SK-N-SH (cell line): ENCODE measurements at regions of chr5 and their contacts with region 1.

Region 1: GRCh38 chr5:140966293-140967225 is at the start of gene PCDHAC2:
- DNase-seq: peak; percentile 83
- H3K4me3 ChIP-seq: peak within 1 kb of the TSS; percentile 64 to 75
- H3K27ac ChIP-seq: peak within 1 kb of the TSS in 1 of 2 experiments; percentile 94; a peak in 2 of 4 replicates
- H3K4me1 ChIP-seq: peaks cover 8 to 41% of the 10 kb centered on the region in 2 experiments; a peak in 3 of 4 replicates
- H3K27me3 ChIP-seq: no peaks in the 10 kb centered on the region
- CTCF ChIP-seq: no peak
- EP300 ChIP-seq: no peak
- RAD21 ChIP-seq: no peak
- polyA plus RNA-seq, gene PCDHAC2: 0.39 and 0.76 TPM in 2 replicates

Region 2: GRCh38 chr5:140710899-140711552 is 255.5 kb before region 1 on chr5:
- CTCF ChIA-PET with region 1: no interaction called
- POLR2A ChIA-PET with region 1: no interaction called
- DNase-seq: peak; percentile 14
- H3K4me3 ChIP-seq: peak overlapping the region; percentile 2 to 31; a peak in 1 of 4 replicates
- H3K27ac ChIP-seq: peak overlapping the region in 1 of 2 experiments; percentile 60; a peak in 2 of 4 replicates
- H3K4me1 ChIP-seq: peaks cover 0 to 3% of the 10 kb centered on the region in 2 experiments; a peak in 1 of 4 replicates
- H3K27me3 ChIP-seq: no peaks in the 10 kb centered on the region
- CTCF ChIP-seq: no peak
- EP300 ChIP-seq: peak in 1 of 2 experiments; percentile 22; a peak in 1 of 4 replicates
- RAD21 ChIP-seq: no peak

Region 3: GRCh38 chr5:140875066-140876065 is 91.2 kb before region 1 on chr5 and contains the start of gene PCDHA12:
- CTCF ChIA-PET with region 1: interaction called, 26 read pairs
- POLR2A ChIA-PET with region 1: interaction called, 6 read pairs
- DNase-seq: peak; percentile 70
- H3K4me3 ChIP-seq: peak within 1 kb of the TSS; percentile 56 to 64
- H3K27ac ChIP-seq: peak within 1 kb of the TSS in 1 of 2 experiments; percentile 50; a peak in 2 of 4 replicates
- H3K4me1 ChIP-seq: no peaks in the 10 kb centered on the region; a peak in 2 of 4 replicates
- H3K27me3 ChIP-seq: no peaks in the 10 kb centered on the region
- CTCF ChIP-seq: peak; percentile 62
- EP300 ChIP-seq: no peak
- RAD21 ChIP-seq: peak; percentile 84
- polyA plus RNA-seq, gene PCDHA12: 0.54 and 0.70 TPM in 2 replicates

Region 4: DNA sequence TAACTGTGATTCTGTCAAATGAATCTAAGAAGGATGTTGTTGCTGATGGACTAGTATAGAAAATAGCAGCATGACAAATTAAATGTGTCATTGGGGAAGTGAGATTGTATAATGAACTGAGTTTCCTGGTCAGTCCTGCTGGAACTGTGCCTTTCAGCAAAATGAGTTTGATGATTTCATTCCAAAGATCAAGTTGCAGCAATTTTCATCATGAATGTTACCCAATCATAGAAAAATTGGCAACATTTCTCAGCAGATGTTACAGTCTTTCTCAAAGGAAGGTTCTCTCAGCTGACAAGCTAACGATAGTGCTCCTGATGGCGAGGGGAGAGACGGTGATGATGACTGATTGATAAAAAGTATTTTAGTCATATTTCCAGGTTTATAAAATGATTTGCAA is 10.4 kb after region 1 on chr5:
- CTCF ChIA-PET with region 1: interaction called, 6 read pairs
- POLR2A ChIA-PET with region 1: interaction called, 23 read pairs
- DNase-seq: no peak
- H3K4me3 ChIP-seq: no peak overlapping the region
- H3K27ac ChIP-seq: peak overlapping the region in 1 of 2 experiments; percentile 98; a peak in 2 of 4 replicates
- H3K4me1 ChIP-seq: peaks cover 9 to 33% of the 10 kb centered on the region in 2 experiments; a peak in 3 of 4 replicates
- H3K27me3 ChIP-seq: no peaks in the 10 kb centered on the region
- CTCF ChIP-seq: no peak
- EP300 ChIP-seq: peak in 1 of 2 experiments; percentile 28; a peak in 1 of 4 replicates
- RAD21 ChIP-seq: no peak

Region 5: DNA sequence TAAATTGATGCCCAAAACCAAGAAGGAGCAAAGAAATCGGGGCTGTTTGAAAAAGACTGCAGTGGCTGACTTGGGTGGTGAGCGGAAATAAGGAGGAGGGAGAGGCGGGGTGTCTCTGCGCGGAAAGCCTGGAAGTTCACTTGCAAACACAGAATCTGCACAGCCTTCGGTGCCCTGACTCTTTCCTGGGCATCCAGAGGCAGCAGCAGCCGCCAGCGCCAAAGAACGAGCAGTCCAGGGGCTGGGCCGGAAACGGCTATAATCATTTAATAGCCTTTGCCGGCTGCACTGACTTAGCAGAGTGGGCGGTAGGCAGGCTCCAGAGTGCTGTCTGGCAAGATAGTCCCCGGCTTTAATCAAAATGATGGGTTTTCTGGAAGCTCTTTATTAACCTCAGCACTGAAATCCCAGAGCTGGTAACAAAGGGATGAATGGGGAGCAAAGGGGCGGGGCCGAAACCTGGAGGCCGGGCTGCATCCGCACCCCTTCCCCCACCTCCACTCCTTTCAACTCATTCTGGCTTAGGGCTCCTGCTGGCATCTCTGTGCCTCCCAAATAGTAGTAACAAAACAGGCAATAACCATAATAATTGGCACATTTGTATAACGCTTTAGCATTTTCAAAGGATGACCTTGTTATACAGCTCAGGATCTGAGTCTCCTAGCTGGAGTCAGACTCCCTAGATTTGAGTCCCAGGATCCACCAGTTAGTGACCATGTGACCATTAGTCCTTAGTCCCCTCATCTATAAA is 35.5 kb after region 1 on chr5:
- CTCF ChIA-PET with region 1: interaction called, 11 read pairs
- POLR2A ChIA-PET with region 1: interaction called, 31 read pairs
- DNase-seq: peak; percentile 77
- H3K4me3 ChIP-seq: peak overlapping the region; percentile 47 to 59
- H3K27ac ChIP-seq: peak overlapping the region in 1 of 2 experiments; percentile 100; a peak in 3 of 4 replicates
- H3K4me1 ChIP-seq: peaks cover 25 to 28% of the 10 kb centered on the region in 2 experiments; a peak in 3 of 4 replicates
- H3K27me3 ChIP-seq: no peaks in the 10 kb centered on the region
- CTCF ChIP-seq: no peak
- EP300 ChIP-seq: peak in 1 of 2 experiments; percentile 78; a peak in 2 of 4 replicates
- RAD21 ChIP-seq: peak; percentile 29; the same call in 1 of the 2 replicates